ENCODE measurements at regions of chr12 and their contacts with region 1.

Region 1: DNA sequence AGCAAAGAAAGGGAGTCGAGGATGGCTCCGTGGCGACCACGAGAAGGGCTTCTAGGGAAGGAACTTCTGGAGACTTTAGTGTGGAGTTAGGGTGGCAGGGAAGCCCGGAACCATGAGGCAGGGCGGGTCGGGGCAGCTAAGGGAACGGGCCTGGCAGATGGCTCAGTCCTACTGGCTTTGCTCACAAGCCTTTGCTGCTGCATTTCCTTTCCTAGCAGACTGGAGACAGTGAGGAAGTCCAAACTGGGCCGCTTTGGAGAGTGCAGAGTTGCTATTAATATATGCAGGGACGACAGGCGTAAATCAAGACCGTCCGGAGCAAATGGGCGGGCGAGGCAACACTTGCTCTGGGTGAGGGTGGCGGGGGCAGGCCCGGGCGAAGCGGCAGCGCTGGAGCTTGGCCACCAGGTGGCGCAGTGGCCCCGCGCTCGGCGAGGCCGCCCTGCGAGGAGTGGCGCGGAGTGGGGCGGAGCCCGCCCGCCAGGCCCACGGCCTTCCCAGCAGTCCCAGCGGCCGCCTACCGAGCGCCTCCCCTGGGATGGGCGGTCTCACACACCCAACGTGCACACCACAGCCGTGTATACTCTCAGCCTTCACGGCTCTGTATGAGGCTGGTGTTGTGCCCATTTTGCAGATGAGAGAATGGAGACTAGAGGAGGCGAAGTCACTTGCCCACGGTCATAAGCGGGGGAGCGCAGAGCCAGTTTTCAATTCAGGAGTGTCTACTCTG is 24.4 kb upstream of the LRTM2 start:
- DNase-seq: peak; percentile 87 to 98 (median 94)
- ATAC-seq: peak; percentile 95
- H3K4me3 ChIP-seq: peak overlapping the region; percentile 86
- H3K4me3 Mint-ChIP-seq: peak overlapping the region; percentile 95
- H3K27ac ChIP-seq: peak overlapping the region; percentile 61 to 78
- H3K27ac Mint-ChIP-seq: peak overlapping the region; percentile 93
- H3K4me1 ChIP-seq: peaks cover 32% of the 10 kb centered on the region
- H3K4me1 Mint-ChIP-seq: peaks cover 20% of the 10 kb centered on the region
- H3K27me3 ChIP-seq: no peaks in the 10 kb centered on the region
- H3K27me3 Mint-ChIP-seq: no peaks in the 10 kb centered on the region
- CTCF ChIP-seq: peak; percentile 75

Region 2: DNA sequence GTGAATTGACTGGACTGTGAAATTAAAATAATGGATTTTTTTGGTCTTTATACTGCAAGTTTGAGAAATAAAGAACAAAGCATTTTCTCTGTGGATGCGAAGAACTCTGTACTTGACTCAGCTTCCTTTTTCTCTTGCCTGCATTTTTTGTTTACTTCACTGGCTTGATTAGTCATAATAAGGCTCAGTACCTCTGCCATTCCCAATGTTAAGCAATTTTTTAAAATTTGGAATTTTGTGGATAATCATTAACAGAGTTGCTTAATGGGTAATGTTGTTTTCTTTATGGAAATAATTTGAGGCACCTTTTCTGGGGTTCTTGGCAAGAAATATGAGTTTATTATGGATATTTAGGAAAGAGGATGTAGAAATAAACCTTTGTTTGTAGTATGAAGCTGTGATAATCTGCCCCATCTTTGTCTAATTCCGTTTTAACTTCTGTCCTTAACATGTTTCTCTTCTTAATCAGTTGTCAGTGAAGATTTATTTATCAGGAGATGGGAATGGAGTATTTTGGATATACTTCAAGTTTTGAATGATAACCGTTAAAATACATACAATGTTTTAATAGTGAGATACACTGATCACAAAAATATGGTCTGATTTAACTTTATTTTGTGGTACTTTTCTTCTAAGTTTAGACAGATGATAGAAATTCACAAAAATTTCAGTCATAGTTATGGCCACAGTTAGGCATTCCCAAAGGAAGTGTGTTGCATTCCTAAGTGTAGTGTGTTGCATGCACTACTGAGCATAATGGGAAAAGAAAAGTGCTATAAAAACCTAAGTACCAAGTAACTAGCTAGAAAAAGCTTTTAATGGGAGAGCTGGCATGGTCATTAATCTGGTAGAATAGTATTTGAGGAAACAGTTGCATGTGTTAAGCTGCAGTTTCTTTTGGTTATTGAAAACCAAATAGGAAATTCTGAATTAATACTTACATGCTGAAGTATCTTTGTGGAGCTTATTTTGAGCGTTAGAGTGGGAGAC is 1015.9 kb before region 1 on chr12:
- CTCF ChIA-PET with region 1: no interaction called
- POLR2A ChIA-PET with region 1: no interaction called
- intact Hi-C with region 1: no loop called
- DNase-seq: peak in 1 of 14 experiments; percentile 30
- ATAC-seq: peak; percentile 63
- H3K4me3 ChIP-seq: peak overlapping the region; percentile 21
- H3K4me3 Mint-ChIP-seq: peak overlapping the region; percentile 88
- H3K27ac ChIP-seq: no peak overlapping the region
- H3K27ac Mint-ChIP-seq: peak overlapping the region; percentile 43
- H3K4me1 ChIP-seq: peaks cover 39% of the 10 kb centered on the region
- H3K4me1 Mint-ChIP-seq: peaks cover 76% of the 10 kb centered on the region
- H3K27me3 ChIP-seq: no peaks in the 10 kb centered on the region
- H3K27me3 Mint-ChIP-seq: no peaks in the 10 kb centered on the region
- CTCF ChIP-seq: no peak

Region 3: DNA sequence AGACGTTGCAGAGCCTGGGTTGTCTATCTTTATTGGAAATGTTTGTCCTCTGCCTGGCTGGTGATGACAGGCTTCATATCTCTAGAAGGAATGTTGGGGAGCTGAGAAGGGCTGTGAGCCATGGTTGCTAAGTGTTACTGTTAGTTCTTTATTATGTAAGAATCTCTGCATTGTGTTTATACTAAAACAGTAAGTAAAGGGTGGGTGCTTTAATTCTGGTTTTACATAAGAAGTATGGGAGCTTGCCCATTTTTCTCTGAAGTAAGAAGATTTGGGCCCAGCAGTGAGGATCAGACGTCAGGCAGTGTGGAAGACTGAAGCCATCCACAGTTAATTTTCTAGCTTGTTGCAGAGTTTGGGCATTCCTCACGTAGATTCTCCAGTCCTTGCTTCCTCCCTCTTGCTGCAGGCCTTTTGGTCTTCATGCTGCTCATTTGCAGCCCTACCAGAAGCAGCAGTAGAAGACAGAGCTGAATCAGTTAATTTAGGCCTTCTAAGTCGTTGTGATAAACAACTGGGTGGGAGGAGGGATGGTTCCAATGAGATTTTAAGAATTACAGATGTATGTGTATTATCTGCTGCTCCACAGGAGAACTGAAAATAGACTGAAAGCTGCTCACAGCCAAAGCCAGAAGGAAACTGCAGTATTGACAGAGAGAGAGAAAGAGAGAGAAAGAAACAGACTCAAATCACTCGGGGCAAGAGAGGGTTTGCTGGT is 145.5 kb before region 1 on chr12:
- CTCF ChIA-PET with region 1: interaction called, 154 read pairs
- POLR2A ChIA-PET with region 1: interaction called, 41 read pairs
- intact Hi-C with region 1: loop called (anchors 1 kb)
- DNase-seq: no peak
- ATAC-seq: no peak
- H3K4me3 ChIP-seq: no peak overlapping the region
- H3K4me3 Mint-ChIP-seq: no peak overlapping the region
- H3K27ac ChIP-seq: no peak overlapping the region
- H3K27ac Mint-ChIP-seq: no peak overlapping the region
- H3K4me1 ChIP-seq: peaks cover 7% of the 10 kb centered on the region
- H3K4me1 Mint-ChIP-seq: no peaks in the 10 kb centered on the region
- H3K27me3 ChIP-seq: no peaks in the 10 kb centered on the region
- H3K27me3 Mint-ChIP-seq: peaks cover 4% of the 10 kb centered on the region
- CTCF ChIP-seq: no peak

Region 4: GRCh38 chr12:1781772-1782171 is 14.2 kb before region 1 on chr12:
- CTCF ChIA-PET with region 1: interaction called, 11 read pairs
- POLR2A ChIA-PET with region 1: no interaction called
- intact Hi-C with region 1: no loop called
- DNase-seq: no peak
- ATAC-seq: no peak
- H3K4me3 ChIP-seq: no peak overlapping the region
- H3K4me3 Mint-ChIP-seq: no peak overlapping the region
- H3K27ac ChIP-seq: no peak overlapping the region
- H3K27ac Mint-ChIP-seq: no peak overlapping the region
- H3K4me1 ChIP-seq: no peaks in the 10 kb centered on the region
- H3K4me1 Mint-ChIP-seq: no peaks in the 10 kb centered on the region
- H3K27me3 ChIP-seq: no peaks in the 10 kb centered on the region
- H3K27me3 Mint-ChIP-seq: no peaks in the 10 kb centered on the region
- CTCF ChIP-seq: no peak

Region 5: GRCh38 chr12:1820191-1820895 is 24.4 kb after region 1 on chr12 and contains the start of gene LRTM2:
- CTCF ChIA-PET with region 1: no interaction called
- POLR2A ChIA-PET with region 1: no interaction called
- intact Hi-C with region 1: no loop called
- DNase-seq: no peak
- ATAC-seq: no peak
- H3K4me3 ChIP-seq: no peak within 1 kb of the TSS
- H3K4me3 Mint-ChIP-seq: no peak within 1 kb of the TSS
- H3K27ac ChIP-seq: no peak within 1 kb of the TSS
- H3K27ac Mint-ChIP-seq: no peak within 1 kb of the TSS
- H3K4me1 ChIP-seq: peaks cover 2% of the 10 kb centered on the region
- H3K4me1 Mint-ChIP-seq: no peaks in the 10 kb centered on the region
- H3K27me3 ChIP-seq: peaks cover 23 to 34% of the 10 kb centered on the region in 2 experiments
- H3K27me3 Mint-ChIP-seq: peaks cover 40% of the 10 kb centered on the region
- CTCF ChIP-seq: no peak
- total RNA-seq, gene LRTM2: 0.11 TPM in 1 of 2 experiments, not detected in the other

Region 6: GRCh38 chr12:1830981-1831963 is 35.3 kb after region 1 on chr12:
- CTCF ChIA-PET with region 1: no interaction called
- POLR2A ChIA-PET with region 1: no interaction called
- intact Hi-C with region 1: no loop called
- DNase-seq: peak in 2 of 14 experiments; percentile 47 to 49
- ATAC-seq: no peak
- H3K4me3 ChIP-seq: no peak overlapping the region
- H3K4me3 Mint-ChIP-seq: no peak overlapping the region
- H3K27ac ChIP-seq: no peak overlapping the region
- H3K27ac Mint-ChIP-seq: no peak overlapping the region
- H3K4me1 ChIP-seq: no peaks in the 10 kb centered on the region
- H3K4me1 Mint-ChIP-seq: no peaks in the 10 kb centered on the region
- H3K27me3 ChIP-seq: peaks cover 13 to 14% of the 10 kb centered on the region in 2 experiments
- H3K27me3 Mint-ChIP-seq: peaks cover 40% of the 10 kb centered on the region
- CTCF ChIP-seq: no peak

Region 7: GRCh38 chr12:2004113-2004929 is 208.4 kb after region 1 on chr12 and contains the start of gene DCP1B:
- CTCF ChIA-PET with region 1: no interaction called
- POLR2A ChIA-PET with region 1: no interaction called
- intact Hi-C with region 1: loop called in 1 of 2 experiments (anchors 2 kb)
- DNase-seq: peak; percentile 84 to 98 (median 90)
- ATAC-seq: peak; percentile 98
- H3K4me3 ChIP-seq: peak within 1 kb of the TSS; percentile 97
- H3K4me3 Mint-ChIP-seq: peak within 1 kb of the TSS; percentile 97
- H3K27ac ChIP-seq: peak within 1 kb of the TSS; percentile 83 to 91
- H3K27ac Mint-ChIP-seq: peak within 1 kb of the TSS; percentile 95
- H3K4me1 ChIP-seq: peaks cover 19% of the 10 kb centered on the region
- H3K4me1 Mint-ChIP-seq: peaks cover 34% of the 10 kb centered on the region
- H3K27me3 ChIP-seq: no peaks in the 10 kb centered on the region
- H3K27me3 Mint-ChIP-seq: no peaks in the 10 kb centered on the region
- CTCF ChIP-seq: no peak
- total RNA-seq, gene DCP1B: 4.3 to 4.6 TPM

Region 8: DNA sequence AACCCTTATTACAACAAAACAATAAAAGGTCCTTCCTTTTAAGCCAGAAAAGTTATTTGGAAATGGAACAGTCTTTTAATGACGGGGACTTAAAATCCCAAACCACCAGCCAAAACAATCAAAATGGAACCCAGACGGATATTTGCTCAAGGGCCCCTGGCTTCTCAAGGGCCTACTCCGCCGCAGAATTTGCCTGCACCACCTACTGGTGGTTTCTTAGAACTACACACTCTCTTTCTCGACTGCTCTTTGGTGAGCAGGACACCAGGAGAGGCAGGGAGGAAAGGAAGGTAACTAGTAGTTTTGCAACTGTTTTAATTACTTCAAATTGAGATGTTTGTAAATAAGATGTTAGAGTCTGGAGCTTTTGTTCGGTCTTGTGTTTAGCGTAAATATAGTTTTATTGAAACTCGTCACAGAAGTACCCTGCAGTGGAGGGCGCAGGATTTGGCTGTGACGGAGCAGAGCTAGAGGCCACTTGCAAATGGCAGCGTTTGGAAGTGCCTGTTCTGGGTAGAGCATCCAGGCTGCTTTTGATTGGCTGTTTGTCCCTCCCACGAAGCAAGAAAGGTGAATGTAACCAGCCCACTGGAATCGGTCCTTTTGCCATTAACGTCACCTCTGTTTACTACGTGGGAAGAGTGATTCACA is 495.4 kb after region 1 on chr12:
- CTCF ChIA-PET with region 1: no interaction called
- POLR2A ChIA-PET with region 1: no interaction called
- intact Hi-C with region 1: loop called (anchors 5 to 10 kb)
- DNase-seq: peak in 7 of 14 experiments; percentile 7 to 59 (median 24)
- ATAC-seq: peak; percentile 39
- H3K4me3 ChIP-seq: no peak overlapping the region
- H3K4me3 Mint-ChIP-seq: no peak overlapping the region
- H3K27ac ChIP-seq: no peak overlapping the region
- H3K27ac Mint-ChIP-seq: no peak overlapping the region
- H3K4me1 ChIP-seq: peaks cover 6% of the 10 kb centered on the region
- H3K4me1 Mint-ChIP-seq: peaks cover 9% of the 10 kb centered on the region
- H3K27me3 ChIP-seq: no peaks in the 10 kb centered on the region
- H3K27me3 Mint-ChIP-seq: peaks cover 8% of the 10 kb centered on the region
- CTCF ChIP-seq: peak; percentile 78

Region 9: DNA sequence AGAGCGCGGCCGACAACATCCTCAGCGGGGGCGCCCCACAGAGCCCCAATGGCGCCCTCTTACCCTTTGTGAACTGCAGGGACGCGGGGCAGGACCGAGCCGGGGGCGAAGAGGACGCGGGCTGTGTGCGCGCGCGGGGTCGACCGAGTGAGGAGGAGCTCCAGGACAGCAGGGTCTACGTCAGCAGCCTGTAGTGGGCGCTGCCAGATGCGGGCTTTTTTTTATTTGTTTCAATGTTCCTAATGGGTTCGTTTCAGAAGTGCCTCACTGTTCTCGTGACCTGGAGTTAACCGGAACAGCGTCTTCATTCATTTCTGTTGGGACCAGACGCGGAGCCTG is 895.0 kb after region 1 on chr12:
- CTCF ChIA-PET with region 1: no interaction called
- POLR2A ChIA-PET with region 1: no interaction called
- intact Hi-C with region 1: loop called in 1 of 2 experiments (anchors 10 kb)
- DNase-seq: peak; percentile 19 to 82 (median 44)
- ATAC-seq: peak; percentile 67
- H3K4me3 ChIP-seq: peak overlapping the region; percentile 77
- H3K4me3 Mint-ChIP-seq: peak overlapping the region; percentile 95
- H3K27ac ChIP-seq: peak overlapping the region; percentile 50 to 83
- H3K27ac Mint-ChIP-seq: peak overlapping the region; percentile 84
- H3K4me1 ChIP-seq: peaks cover 31% of the 10 kb centered on the region
- H3K4me1 Mint-ChIP-seq: peaks cover 49% of the 10 kb centered on the region
- H3K27me3 ChIP-seq: no peaks in the 10 kb centered on the region
- H3K27me3 Mint-ChIP-seq: peaks cover 5% of the 10 kb centered on the region
- CTCF ChIP-seq: no peak

Region 10: DNA sequence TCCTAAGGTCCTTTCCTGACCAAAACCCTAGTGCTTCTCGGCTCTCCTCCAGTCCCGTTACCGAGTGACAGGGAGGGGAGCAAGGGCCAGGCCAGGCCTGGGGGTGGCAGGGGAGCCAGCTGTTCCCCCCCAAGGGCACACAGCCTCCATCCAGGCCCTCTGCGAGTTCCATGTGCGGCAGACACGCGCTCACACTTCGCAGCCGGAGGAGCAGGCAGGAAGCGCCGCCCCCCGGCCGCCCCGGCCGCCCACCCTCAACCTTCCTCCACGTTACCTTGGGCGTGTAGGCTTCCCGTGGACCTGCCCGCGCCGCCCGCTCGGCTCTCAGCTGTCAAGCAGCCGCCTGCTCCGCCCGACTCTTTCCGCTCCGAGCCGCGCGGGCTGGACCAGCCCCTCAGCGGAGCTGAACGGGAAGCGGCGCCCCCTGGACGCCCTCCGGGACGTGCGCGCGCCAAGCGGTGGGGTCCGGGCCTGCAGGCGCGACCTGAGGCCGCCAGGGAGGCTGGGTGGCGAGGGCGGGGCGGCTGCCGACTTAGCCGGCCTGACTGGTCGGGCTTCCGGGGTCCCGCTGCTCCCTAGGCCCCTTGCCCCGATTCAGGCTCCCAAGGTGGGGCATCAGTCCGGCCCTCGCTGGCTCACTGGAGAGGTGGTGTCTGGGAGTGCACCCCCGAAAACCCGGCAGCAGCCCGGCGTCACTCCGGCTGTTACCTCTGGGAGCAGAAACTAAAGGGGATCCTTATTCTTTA is 1957.0 kb after region 1 on chr12 and contains the start of gene CRACR2A:
- CTCF ChIA-PET with region 1: no interaction called
- POLR2A ChIA-PET with region 1: no interaction called
- intact Hi-C with region 1: loop called in 1 of 2 experiments (anchors 5 kb)
- DNase-seq: peak; percentile 70 to 92 (median 79)
- ATAC-seq: peak; percentile 78
- H3K4me3 ChIP-seq: peak within 1 kb of the TSS; percentile 92
- H3K4me3 Mint-ChIP-seq: peak within 1 kb of the TSS; percentile 89
- H3K27ac ChIP-seq: peak within 1 kb of the TSS; percentile 92 to 95
- H3K27ac Mint-ChIP-seq: peak within 1 kb of the TSS; percentile 92
- H3K4me1 ChIP-seq: peaks cover 68% of the 10 kb centered on the region
- H3K4me1 Mint-ChIP-seq: peaks cover 71% of the 10 kb centered on the region
- H3K27me3 ChIP-seq: no peaks in the 10 kb centered on the region
- H3K27me3 Mint-ChIP-seq: no peaks in the 10 kb centered on the region
- CTCF ChIP-seq: peak; percentile 80
- total RNA-seq, gene CRACR2A: 23.5 to 27.5 TPM

Measured in CD4-positive, alpha-beta T cell (primary cell).